ENCODE measurements at regions of chr16 and their contacts with region 1.

Region 1: DNA sequence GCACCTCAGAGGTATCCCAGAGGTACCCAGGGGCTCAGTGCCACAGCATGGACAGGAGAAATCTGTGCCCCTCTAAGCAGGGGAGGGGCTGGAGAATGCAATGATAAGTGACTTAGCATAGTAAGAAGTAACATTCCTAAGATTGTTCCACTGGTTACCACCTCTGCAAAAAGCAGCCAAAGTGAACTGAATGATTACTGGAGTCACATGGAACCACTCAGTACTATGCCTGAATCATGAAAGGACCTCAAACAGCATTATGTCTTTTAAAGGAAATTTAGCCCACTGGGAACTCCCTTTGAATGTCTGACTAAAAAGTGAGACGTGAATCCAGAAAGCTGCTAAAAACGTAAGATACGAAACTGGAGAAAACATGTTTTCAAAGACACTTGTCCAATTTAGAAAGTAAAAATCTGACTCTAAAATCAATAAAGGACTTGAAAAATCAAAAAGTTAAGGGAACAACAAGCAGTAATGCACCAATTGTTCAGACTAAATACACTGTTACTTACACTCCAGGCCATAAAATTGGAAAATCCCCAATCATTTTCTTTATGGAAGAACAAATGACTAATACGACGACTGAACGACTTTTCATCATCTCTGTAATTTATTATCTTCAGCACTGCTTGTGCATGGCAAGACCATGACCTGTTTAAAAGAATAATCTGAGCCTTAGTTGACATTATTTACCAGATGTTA is 38.6 kb downstream of the LITAFD start:
- DNase-seq: no peak
- ATAC-seq: peak; percentile 73
- H3K4me3 Mint-ChIP-seq: no peak overlapping the region
- H3K27ac Mint-ChIP-seq: peak overlapping the region; percentile 83
- H3K4me1 Mint-ChIP-seq: peaks cover 71% of the 10 kb centered on the region
- H3K27me3 Mint-ChIP-seq: no peaks in the 10 kb centered on the region

Region 2: DNA sequence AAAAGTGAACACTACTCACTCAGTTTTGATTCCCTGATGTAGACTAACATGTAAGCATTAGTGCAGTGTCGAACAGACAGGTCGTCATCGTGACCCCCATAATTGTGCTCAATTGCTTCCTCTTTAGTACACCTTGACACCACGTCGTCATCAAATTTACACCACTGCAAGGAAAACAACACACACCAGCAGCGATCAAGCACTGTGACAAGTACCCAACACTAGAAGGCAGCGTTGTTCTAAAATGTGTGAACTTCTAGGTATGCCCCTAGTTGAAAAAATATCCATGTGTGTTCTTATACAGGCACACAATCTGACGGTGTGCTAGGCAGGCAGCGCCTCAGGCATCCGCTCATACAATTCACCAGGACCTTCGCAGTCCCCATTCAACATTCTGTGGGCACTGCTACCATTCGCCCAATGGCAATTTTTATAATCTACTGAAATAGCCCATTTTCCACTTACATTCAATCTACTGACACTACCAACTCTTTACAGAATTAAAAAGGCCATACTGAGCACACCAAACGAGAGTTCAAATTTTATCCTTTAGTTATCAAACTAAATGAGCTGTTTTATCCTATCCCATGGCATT is 15.5 kb before region 1 on chr16:
- CTCF ChIA-PET with region 1: interaction called, 3 read pairs
- POLR2A ChIA-PET with region 1: no interaction called
- intact Hi-C with region 1: loop called in 1 of 2 experiments (anchors 2 kb)
- DNase-seq: no peak
- ATAC-seq: peak; percentile 78
- H3K4me3 Mint-ChIP-seq: no peak overlapping the region
- H3K27ac Mint-ChIP-seq: peak overlapping the region; percentile 25
- H3K4me1 Mint-ChIP-seq: peaks cover 13% of the 10 kb centered on the region
- H3K27me3 Mint-ChIP-seq: no peaks in the 10 kb centered on the region